Transverse colon (tissue), 4 donors: ENCODE measurements at regions of chr17 and their contacts with region 1.

Region 1: DNA sequence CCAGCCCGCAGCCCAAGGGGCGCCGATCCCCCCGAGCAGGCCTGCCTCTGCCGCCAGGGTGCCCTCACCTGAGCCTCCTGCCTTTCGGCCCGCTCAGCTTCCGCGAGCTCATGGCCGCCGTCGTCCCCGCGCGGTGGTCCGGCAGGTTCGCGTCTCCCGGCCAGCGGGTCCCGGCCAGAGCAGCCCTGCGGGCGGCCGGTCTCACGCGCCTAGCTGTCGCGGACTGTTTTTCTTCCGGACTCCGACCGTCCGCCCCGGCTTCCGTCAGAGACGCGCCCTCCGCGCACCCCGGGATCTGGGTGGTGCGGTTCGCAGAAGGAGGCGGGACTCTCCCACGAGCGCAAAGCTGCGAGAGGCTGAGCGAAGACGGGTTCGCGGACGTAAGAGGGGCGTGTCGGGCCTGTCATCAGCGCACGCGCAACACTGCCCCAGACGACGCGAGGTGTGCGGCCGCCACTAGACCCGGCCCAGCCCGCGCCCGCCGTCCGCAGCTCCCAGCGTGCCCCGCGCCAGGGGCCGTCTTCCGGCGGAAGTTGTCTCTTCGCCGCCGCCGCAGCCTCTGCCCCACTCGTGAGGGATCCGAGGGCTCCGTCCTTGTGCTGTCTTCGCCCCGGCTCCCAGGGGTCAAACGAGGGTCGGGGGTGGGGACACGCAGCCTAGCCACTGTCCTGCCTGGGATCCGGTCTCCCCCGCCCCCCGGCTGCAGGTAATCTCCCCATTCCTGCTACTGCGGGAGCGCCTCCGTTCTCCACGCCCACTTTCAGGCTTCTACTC is at the start of gene INPP5K:
- DNase-seq: peak; percentile 99
- H3K4me3 ChIP-seq: peak within 1 kb of the TSS; percentile 86 to 96 (median 89)
- H3K27ac ChIP-seq: peak within 1 kb of the TSS; percentile 96 to 98 (median 98)
- H3K4me1 ChIP-seq: peaks cover 29 to 45% (median 38%) of the 10 kb centered on the region in 4 donors
- H3K27me3 ChIP-seq: no peaks in the 10 kb centered on the region
- CTCF ChIP-seq: peak in 1 of 5 experiments; percentile 10
- EP300 ChIP-seq: no peak
- POLR2A ChIP-seq: peak; percentile 96
- total RNA-seq, gene INPP5K: 10.9 to 114 (median 81.9) TPM

Region 2: GRCh38 chr17:1260086-1260769 is 256.3 kb before region 1 on chr17:
- in situ Hi-C with region 1: loop called in 2 of 4 experiments (anchors 25 kb)
- intact Hi-C with region 1: loop called (anchors 5 kb)
- DNase-seq: no peak
- H3K4me3 ChIP-seq: peak overlapping the region; percentile 31 to 54 (median 38)
- H3K27ac ChIP-seq: peak overlapping the region; percentile 58 to 79 (median 70)
- H3K4me1 ChIP-seq: peaks cover 0 to 13% (median 9%) of the 10 kb centered on the region in 4 donors
- H3K27me3 ChIP-seq: peaks cover 7% of the 10 kb centered on the region
- CTCF ChIP-seq: no peak
- EP300 ChIP-seq: no peak
- POLR2A ChIP-seq: no peak

Region 3: GRCh38 chr17:1267471-1267947 is 249.1 kb before region 1 on chr17:
- in situ Hi-C with region 1: loop called in 3 of 4 experiments (anchors 10 to 25 kb)
- intact Hi-C with region 1: loop called (anchors 5 kb)
- DNase-seq: no peak
- H3K4me3 ChIP-seq: peak overlapping the region; percentile 58 to 85 (median 74)
- H3K27ac ChIP-seq: peak overlapping the region; percentile 89 to 93 (median 92)
- H3K4me1 ChIP-seq: peaks cover 0 to 19% (median 15%) of the 10 kb centered on the region in 4 donors
- H3K27me3 ChIP-seq: peaks cover 36% of the 10 kb centered on the region
- CTCF ChIP-seq: no peak
- EP300 ChIP-seq: no peak
- POLR2A ChIP-seq: no peak

Region 4: GRCh38 chr17:1275962-1276736 is 240.4 kb before region 1 on chr17:
- in situ Hi-C with region 1: loop called in 3 of 4 experiments (anchors 10 to 25 kb)
- intact Hi-C with region 1: no loop called
- DNase-seq: peak; percentile 71
- H3K4me3 ChIP-seq: no peak overlapping the region
- H3K27ac ChIP-seq: no peak overlapping the region
- H3K4me1 ChIP-seq: no peaks in the 10 kb centered on the region
- H3K27me3 ChIP-seq: peaks cover 63% of the 10 kb centered on the region
- CTCF ChIP-seq: peak; percentile 63 to 91 (median 82)
- EP300 ChIP-seq: no peak
- POLR2A ChIP-seq: no peak

Region 5: GRCh38 chr17:1365445-1366039 is 151.0 kb before region 1 on chr17:
- in situ Hi-C with region 1: loop called in 2 of 4 experiments (anchors 10 kb)
- intact Hi-C with region 1: loop called (anchors 10 kb)
- DNase-seq: peak; percentile 63
- H3K4me3 ChIP-seq: peak overlapping the region in 1 of 4 donors; percentile 8
- H3K27ac ChIP-seq: peak overlapping the region; percentile 45 to 68 (median 48)
- H3K4me1 ChIP-seq: peaks cover 30 to 84% (median 53%) of the 10 kb centered on the region in 4 donors
- H3K27me3 ChIP-seq: no peaks in the 10 kb centered on the region
- CTCF ChIP-seq: peak; percentile 85 to 95 (median 88)
- EP300 ChIP-seq: no peak
- POLR2A ChIP-seq: no peak

Region 6: DNA sequence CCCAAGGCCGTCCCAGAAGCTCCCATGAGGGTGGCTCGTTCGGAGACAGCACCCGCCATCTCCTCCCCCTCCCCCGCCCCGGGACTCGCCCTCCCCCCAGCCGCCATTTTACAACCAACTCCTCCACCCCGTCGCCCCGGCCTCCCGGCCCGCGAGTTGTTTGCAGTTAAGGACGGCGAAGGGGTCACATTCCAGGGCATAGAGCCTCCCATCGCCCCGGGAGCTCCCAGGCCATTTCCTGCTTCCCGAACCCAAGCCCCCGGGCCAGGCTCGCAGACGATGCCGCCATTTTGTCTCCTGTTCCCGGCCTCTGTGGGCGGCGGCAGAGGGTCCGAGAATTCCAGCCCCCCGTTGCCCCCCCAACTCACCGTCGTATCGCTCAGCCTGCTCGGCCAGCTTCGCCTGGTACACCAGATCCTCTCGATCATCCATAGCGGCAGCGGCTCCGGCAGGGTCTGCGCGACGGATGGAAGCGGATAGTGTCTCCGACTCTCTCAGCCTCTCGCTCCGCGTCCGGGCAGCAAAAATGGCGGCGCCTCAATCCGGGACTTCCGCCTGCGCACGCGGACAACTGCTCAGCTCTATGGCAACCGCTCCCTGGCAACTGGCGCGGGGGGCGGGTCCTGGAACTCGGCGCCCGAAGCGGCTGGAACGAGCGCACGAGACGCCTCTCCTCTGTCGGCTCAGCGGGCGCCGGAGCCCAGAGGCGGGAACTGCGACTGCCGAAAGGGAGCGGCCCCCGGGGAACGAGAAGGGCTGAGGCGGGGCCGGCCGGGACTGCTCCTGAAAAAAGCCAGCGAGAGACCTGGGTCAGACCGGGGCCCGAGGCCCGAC is 116.7 kb before region 1 on chr17 and contains the start of gene YWHAE:
- in situ Hi-C with region 1: loop called in 1 of 4 experiments (anchors 25 kb)
- intact Hi-C with region 1: no loop called
- DNase-seq: peak; percentile 98
- H3K4me3 ChIP-seq: peak within 1 kb of the TSS; percentile 68 to 80 (median 71)
- H3K27ac ChIP-seq: peak within 1 kb of the TSS; percentile 91 to 95 (median 94)
- H3K4me1 ChIP-seq: peaks cover 19 to 44% (median 40%) of the 10 kb centered on the region in 4 donors
- H3K27me3 ChIP-seq: no peaks in the 10 kb centered on the region
- CTCF ChIP-seq: no peak
- EP300 ChIP-seq: no peak
- POLR2A ChIP-seq: peak; percentile 91
- total RNA-seq, gene YWHAE: 158 to 2,397 (median 594) TPM

Region 7: DNA sequence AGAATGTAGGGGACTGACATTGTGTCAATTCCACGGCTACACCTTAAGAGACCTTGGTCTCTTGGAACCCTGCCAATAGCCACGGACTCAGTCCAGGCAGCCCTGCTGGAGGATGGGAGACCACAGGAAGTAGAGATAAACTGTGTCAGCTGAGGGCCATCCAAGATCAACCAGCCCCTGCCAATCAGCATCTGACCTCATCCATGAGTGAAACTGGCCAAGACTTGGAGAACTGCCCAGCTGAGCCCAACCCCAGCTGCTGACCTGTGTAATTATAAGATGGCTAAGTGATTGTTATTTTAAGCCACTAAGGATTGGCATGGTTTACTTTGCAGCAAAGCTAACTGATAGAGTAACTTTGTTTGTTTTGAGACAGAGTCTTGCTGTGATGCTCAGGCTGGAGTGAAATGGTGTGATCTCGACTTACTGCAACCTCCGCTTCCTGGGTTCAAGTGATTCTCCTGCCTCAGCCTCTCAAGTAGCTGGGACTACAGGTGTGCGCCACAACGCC is 103.2 kb before region 1 on chr17:
- in situ Hi-C with region 1: no loop called
- intact Hi-C with region 1: no loop called
- DNase-seq: peak; percentile 26
- H3K4me3 ChIP-seq: no peak overlapping the region
- H3K27ac ChIP-seq: no peak overlapping the region
- H3K4me1 ChIP-seq: no peaks in the 10 kb centered on the region
- H3K27me3 ChIP-seq: no peaks in the 10 kb centered on the region
- CTCF ChIP-seq: no peak
- EP300 ChIP-seq: no peak
- POLR2A ChIP-seq: no peak

Region 8: DNA sequence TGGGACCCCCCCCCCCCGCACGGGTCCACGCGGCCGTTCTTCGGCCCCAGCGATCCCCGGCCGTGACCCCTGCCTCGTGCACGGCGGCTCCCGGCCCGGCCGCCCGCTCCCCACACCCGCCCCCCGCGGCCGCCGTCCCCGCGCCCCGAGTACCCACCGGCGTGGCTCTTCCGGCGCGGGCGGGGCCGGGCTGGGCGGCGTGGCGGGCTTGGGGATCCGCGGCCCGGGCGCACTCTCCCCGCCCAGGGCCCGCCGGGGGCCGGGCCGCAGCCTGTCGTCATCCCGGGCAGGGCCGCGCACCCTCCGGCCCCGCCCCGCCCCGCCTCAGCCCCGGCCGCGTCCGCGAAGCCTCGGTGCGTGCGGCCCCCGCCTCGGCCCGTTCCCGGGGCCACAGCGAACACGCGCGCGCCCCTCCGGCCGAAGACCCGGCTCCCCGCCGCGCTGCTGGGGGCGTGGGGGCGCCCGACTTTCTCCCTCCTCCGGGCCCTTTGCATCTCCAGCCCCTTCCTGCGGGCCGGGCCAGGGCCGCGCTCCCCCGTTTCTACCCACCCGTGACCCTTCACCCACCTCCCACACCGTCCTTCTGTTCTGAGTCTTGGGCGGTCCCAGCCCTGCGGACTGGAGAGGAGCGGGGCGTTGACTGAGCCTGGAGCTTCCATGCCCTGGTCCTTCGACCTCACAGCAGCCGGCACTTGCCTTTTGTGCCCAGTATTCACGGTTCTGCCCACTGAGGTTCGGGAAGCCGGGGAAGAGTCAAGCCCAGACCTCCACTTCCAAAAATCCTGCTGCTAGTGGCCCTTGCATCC is 24.9 kb before region 1 on chr17:
- in situ Hi-C with region 1: no loop called
- intact Hi-C with region 1: no loop called
- DNase-seq: peak; percentile 84
- H3K4me3 ChIP-seq: peak overlapping the region; percentile 65 to 80 (median 76)
- H3K27ac ChIP-seq: peak overlapping the region; percentile 94 to 99 (median 98)
- H3K4me1 ChIP-seq: peaks cover 48 to 73% (median 64%) of the 10 kb centered on the region in 4 donors
- H3K27me3 ChIP-seq: no peaks in the 10 kb centered on the region
- CTCF ChIP-seq: no peak
- EP300 ChIP-seq: no peak
- POLR2A ChIP-seq: no peak